ENCODE measurements at regions of chr6 and their contacts with region 1.

Region 1: DNA sequence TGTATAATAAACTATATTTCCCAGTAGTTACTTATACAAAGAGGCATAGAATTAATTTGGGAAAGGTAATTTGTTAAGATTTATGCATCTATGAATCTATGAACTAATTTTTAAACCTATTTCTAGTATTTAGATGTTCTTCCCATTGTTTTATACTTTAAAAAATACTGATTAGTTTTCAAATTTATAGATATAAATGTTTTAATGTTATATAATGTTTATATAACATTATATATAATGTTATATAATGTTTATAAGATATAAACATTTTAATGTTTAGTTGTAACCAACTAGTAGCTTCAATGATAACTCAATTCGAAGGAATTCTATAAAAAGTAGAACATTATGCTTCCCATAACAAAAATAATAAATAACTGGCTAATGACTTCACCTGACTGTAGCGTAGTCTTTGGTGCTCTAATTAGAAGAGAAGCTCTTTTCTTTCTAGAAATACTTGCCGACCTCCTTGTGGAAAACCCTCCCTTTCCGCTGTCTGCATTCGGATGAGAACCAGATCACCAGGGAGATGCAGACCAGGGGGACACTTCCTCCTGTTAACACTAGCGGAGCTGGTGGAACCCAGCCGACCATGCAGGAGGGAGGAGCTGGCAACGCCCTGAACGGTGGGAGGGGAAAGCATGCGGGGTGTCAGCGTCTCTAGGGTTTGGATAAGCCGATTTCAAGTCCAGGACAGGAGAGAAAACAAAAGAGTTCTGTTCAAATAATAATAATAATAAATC is 158.4 kb downstream of the OR2B2 start:
- DNase-seq: peak; percentile 82
- ATAC-seq: peak; percentile 48
- H3K4me3 ChIP-seq: peak overlapping the region; percentile 42 to 73 (median 63)
- H3K4me3 Mint-ChIP-seq: peak overlapping the region; percentile 91
- H3K27ac ChIP-seq: no peak overlapping the region
- H3K27ac Mint-ChIP-seq: peak overlapping the region; percentile 91
- H3K4me1 ChIP-seq: peaks cover 22 to 25% of the 10 kb centered on the region in 2 donors
- H3K4me1 Mint-ChIP-seq: peaks cover 30% of the 10 kb centered on the region
- H3K27me3 ChIP-seq: peaks cover 0 to 26% (median 5%) of the 10 kb centered on the region in 4 experiments
- H3K27me3 Mint-ChIP-seq: peaks cover 6% of the 10 kb centered on the region
- CTCF ChIP-seq: no peak

Region 2: DNA sequence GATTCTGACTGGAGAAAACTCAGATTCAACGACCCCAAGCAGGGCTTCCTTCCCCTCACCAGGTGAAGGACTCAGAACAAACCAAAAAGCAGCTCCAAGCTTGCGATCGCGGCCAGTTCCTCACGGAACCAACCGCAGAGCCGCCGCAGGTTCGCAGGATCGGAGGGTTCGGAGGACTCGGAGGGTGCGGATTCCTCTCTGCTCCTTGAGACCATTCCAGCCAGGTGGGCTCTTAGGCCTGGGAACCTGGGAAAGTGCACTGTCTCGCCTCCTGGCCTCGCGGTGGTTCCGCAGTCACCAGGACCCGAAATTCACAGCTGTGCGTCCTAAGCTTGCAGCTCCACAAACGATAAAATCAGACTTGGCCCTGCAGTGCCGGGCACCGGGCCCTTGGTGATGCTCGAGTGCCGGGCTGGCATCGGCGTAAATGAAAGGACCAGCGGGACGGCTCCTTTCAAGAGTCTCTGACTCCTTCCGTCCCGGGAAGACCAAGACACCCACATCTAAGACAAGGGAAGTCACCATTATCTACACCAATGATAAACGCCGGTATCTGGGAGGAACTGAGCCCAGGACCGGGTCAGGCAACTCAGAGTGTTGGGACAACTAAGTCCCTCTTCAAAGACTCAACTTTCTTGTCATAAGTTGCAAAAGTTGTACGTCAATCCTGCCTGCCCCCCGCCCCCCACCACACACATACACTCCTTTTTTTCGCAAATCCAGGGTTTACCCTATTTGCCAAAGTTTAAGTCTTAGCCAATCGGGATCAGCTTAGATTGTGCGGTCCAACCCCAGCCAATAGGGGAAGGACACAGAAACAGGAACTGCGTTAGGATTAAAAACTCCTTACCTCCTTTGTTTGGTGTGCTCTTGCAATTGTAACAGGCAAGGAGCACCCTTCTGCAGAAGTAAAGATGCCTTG is 576.1 kb before region 1 on chr6:
- CTCF ChIA-PET with region 1: interaction called, 7 read pairs
- POLR2A ChIA-PET with region 1: interaction called, 7 read pairs
- intact Hi-C with region 1: loop called (anchors 2 kb)
- DNase-seq: peak; percentile 90
- ATAC-seq: peak; percentile 86
- H3K4me3 ChIP-seq: peak overlapping the region; percentile 88 to 100 (median 98)
- H3K4me3 Mint-ChIP-seq: peak overlapping the region; percentile 96
- H3K27ac ChIP-seq: peak overlapping the region; percentile 34 to 78
- H3K27ac Mint-ChIP-seq: peak overlapping the region; percentile 91
- H3K4me1 ChIP-seq: peaks cover 0 to 7% of the 10 kb centered on the region in 2 donors
- H3K4me1 Mint-ChIP-seq: peaks cover 15% of the 10 kb centered on the region
- H3K27me3 ChIP-seq: no peaks in the 10 kb centered on the region
- H3K27me3 Mint-ChIP-seq: no peaks in the 10 kb centered on the region
- CTCF ChIP-seq: peak; percentile 71

Region 3: GRCh38 chr6:27441001-27441400 is 312.8 kb before region 1 on chr6:
- CTCF ChIA-PET with region 1: no interaction called
- POLR2A ChIA-PET with region 1: no interaction called
- intact Hi-C with region 1: no loop called
- DNase-seq: no peak
- ATAC-seq: no peak
- H3K4me3 ChIP-seq: no peak overlapping the region
- H3K4me3 Mint-ChIP-seq: no peak overlapping the region
- H3K27ac ChIP-seq: no peak overlapping the region
- H3K27ac Mint-ChIP-seq: no peak overlapping the region
- H3K4me1 ChIP-seq: no peaks in the 10 kb centered on the region
- H3K4me1 Mint-ChIP-seq: no peaks in the 10 kb centered on the region
- H3K27me3 ChIP-seq: no peaks in the 10 kb centered on the region
- H3K27me3 Mint-ChIP-seq: peaks cover under 1% of the 10 kb centered on the region
- CTCF ChIP-seq: no peak

Region 4: DNA sequence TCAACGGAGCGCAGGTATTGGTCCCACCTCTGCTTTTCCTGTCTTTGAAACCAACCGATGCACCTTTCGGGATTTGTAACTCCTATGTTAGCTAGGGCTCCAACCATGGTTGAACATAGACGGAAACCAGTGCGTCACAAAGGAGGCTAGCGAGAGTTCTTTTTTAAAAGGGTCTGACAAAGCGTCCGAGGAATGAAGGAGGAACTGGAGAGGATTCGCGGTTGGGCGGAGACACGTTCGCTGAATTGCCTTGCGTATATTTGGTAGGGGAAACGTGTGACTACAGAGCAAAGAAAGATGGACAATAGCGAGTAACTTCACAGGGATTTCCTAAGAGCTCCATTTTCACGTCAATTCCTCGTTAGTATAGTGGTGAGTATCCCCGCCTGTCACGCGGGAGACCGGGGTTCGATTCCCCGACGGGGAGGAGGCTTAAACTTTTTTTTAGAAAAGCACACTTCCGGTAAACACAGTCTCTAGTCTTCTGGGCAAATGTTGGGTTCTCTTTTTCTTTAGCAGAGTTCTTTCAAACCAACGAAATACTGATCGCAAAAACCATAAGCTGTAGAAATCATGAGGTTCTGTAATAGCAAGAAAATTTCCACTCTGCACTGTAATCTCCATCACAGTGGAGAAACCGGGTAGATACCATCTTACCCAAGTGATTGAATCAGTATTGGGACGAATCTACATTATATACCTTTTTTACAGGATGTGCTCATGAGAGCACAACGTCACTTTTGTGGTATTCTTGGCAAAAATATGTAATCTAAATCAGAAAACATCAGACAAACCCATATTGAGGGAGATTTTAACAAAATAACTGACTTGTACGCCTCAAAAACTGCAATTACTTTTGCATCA is 274.3 kb before region 1 on chr6:
- CTCF ChIA-PET with region 1: interaction called, 12 read pairs
- POLR2A ChIA-PET with region 1: interaction called, 4 read pairs
- intact Hi-C with region 1: loop called (anchors 1 kb)
- DNase-seq: peak; percentile 96
- ATAC-seq: peak; percentile 77
- H3K4me3 ChIP-seq: peak overlapping the region; percentile 88 to 97 (median 95)
- H3K4me3 Mint-ChIP-seq: no peak overlapping the region
- H3K27ac ChIP-seq: peak overlapping the region; percentile 98
- H3K27ac Mint-ChIP-seq: no peak overlapping the region
- H3K4me1 ChIP-seq: peaks cover 15 to 17% of the 10 kb centered on the region in 2 donors
- H3K4me1 Mint-ChIP-seq: peaks cover 6% of the 10 kb centered on the region
- H3K27me3 ChIP-seq: no peaks in the 10 kb centered on the region
- H3K27me3 Mint-ChIP-seq: no peaks in the 10 kb centered on the region
- CTCF ChIP-seq: no peak

Region 5: DNA sequence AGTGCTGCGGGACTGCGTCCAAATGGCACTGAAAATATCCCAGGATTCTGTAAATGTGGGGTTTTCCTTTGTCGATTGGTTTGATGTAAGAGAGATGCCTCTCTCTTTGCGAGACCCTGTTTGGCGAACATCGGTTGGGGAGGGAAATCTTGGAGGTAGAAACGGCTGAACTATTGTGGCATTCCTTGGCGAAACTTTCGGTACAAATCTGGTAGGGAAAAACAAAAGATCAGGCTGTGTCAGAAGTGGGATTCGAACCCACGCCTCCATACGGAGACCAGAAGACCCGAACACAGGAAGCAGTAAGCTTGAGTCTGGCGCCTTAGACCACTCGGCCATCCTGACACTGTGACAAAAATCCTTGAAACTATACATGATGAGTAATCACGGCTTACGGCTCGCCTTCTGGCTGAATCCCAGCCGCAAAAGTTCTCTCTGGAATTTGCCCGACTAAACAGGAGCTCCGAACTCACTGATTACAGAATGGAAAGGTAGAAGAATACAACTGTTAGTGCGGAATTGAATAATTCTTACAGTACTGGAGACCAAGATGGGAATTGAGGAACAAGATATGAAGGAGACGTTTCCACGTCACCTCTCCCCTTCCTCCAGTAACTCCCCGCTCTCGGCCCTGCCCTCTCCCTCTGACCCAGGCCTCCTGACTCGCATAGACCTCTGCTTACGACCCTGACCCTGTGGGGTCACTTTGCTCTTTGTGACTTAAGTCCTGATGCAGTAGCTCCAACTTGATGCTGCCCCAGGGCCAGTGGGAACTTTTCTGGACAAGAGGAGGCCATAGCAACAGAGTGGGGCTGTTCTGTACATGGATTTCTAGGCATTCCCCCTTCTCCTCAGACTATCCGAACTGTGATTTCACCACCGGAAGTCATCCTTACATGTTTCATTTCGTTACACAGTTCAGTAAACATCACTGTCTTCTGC is 148.2 kb before region 1 on chr6:
- CTCF ChIA-PET with region 1: no interaction called
- POLR2A ChIA-PET with region 1: no interaction called
- intact Hi-C with region 1: no loop called
- DNase-seq: peak; percentile 22
- ATAC-seq: no peak
- H3K4me3 ChIP-seq: no peak overlapping the region
- H3K4me3 Mint-ChIP-seq: peak overlapping the region; percentile 13
- H3K27ac ChIP-seq: no peak overlapping the region
- H3K27ac Mint-ChIP-seq: peak overlapping the region; percentile 11
- H3K4me1 ChIP-seq: peaks cover 0 to 12% of the 10 kb centered on the region in 2 donors
- H3K4me1 Mint-ChIP-seq: peaks cover 9% of the 10 kb centered on the region
- H3K27me3 ChIP-seq: peaks cover 0 to 65% (median 36%) of the 10 kb centered on the region in 4 experiments
- H3K27me3 Mint-ChIP-seq: peaks cover 54% of the 10 kb centered on the region
- CTCF ChIP-seq: no peak

Region 6: DNA sequence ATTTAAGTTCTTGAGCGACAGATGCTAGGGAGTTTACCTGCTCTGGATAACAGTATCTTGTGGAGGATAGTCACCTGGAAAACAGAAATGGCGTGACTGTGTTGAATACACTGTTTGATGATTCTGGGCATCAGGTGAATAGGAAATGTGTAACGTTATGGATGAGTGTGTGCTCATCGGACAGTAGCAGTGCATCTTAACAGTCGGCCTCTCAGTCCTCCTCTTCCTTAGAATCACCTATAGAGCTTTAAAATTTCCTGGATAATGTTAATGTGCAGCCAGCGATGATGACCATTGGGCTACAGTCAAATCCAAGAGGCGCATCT is 59.3 kb before region 1 on chr6:
- CTCF ChIA-PET with region 1: interaction called, 10 read pairs
- POLR2A ChIA-PET with region 1: no interaction called
- intact Hi-C with region 1: no loop called
- DNase-seq: no peak
- ATAC-seq: no peak
- H3K4me3 ChIP-seq: peak overlapping the region; percentile 70 to 97 (median 88)
- H3K4me3 Mint-ChIP-seq: peak overlapping the region; percentile 98
- H3K27ac ChIP-seq: no peak overlapping the region
- H3K27ac Mint-ChIP-seq: peak overlapping the region; percentile 88
- H3K4me1 ChIP-seq: peaks cover 6 to 11% of the 10 kb centered on the region in 2 donors
- H3K4me1 Mint-ChIP-seq: peaks cover 23% of the 10 kb centered on the region
- H3K27me3 ChIP-seq: no peaks in the 10 kb centered on the region
- H3K27me3 Mint-ChIP-seq: no peaks in the 10 kb centered on the region
- CTCF ChIP-seq: no peak

Region 7: DNA sequence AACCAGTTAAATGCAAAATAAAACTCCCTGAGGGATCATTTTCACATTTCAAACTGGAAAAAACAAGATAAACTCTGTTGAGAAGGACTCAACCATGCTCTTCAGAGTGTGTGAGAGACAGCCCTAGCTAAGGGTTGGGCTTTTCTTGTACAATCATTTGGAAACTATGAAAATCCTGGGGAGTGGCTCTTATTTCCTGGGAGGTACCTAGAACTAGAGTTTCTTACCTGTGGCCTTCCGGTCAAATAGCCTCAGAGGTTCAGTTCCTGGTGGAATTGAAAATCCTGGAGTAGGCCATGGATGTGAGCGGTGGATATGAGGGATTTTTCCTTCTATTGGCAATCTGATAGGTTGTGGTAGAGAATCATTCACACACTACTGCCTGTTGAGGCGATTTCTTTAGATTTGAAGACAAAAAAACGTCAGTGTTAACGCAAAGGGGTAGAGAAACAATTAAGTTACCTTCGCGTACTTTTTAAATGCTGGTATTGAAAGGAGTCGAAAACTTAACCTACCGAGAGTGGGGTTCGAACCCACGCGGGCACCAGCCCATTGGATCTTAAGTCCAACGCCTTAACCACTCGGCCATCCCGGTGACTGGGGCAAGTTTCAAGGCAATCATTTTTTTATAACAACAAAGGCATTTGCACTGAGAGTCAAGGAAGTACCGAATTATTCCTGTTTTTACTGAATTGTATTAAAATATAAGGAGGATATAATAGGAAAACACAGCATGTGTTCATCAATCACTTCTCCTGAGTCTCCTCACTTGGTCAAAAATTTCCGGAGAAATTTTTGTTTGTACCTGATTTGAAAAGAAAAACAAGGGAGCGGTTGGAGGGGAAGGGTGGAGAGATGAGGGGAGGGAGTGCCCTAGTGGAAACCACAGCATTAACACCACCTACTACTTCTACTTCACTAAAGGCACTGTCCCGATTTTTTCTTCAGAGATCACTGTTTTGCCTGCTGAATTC is 32.9 kb before region 1 on chr6:
- CTCF ChIA-PET with region 1: no interaction called
- POLR2A ChIA-PET with region 1: no interaction called
- intact Hi-C with region 1: no loop called
- DNase-seq: no peak
- ATAC-seq: no peak
- H3K4me3 ChIP-seq: no peak overlapping the region
- H3K4me3 Mint-ChIP-seq: no peak overlapping the region
- H3K27ac ChIP-seq: no peak overlapping the region
- H3K27ac Mint-ChIP-seq: no peak overlapping the region
- H3K4me1 ChIP-seq: no peaks in the 10 kb centered on the region
- H3K4me1 Mint-ChIP-seq: peaks cover 4% of the 10 kb centered on the region
- H3K27me3 ChIP-seq: peaks cover 0 to 24% (median 22%) of the 10 kb centered on the region in 4 experiments
- H3K27me3 Mint-ChIP-seq: peaks cover 40% of the 10 kb centered on the region
- CTCF ChIP-seq: no peak

Region 8: DNA sequence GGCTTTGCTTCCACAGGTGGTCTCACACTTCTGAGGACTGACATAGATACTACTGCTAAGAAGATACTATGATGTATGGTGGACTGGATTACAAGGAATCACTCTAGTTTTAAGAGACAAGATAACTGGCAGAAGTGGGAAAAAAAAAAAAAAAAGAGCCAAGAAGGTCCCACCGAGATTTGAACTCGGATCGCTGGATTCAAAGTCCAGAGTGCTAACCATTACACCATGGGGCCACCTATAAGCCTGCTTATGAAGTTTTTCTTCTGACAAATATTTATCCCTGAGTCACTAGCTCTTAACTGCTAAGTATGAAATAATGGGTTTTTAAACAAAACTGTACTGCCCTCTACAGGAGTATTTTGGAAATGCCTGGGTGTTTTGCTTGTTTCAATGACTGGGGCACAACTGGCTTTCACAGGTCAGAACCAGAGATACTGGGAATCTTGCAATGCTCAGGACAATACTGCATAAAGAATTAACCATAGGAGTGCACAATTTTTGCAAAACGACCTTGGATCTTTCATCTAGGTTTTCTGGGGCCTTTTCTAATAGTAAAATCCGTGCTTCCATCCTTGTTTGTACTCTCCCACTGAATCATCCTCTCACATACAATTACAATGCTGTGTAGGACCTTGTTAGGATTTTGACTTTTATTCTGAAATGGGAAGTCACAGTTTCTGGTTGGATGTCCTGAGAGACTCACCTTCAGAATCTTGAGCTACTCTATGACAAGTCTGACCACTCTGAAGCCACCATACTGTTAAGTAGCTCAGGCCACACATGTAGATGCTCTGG is 42.1 kb after region 1 on chr6:
- CTCF ChIA-PET with region 1: interaction called, 11 read pairs
- POLR2A ChIA-PET with region 1: no interaction called
- intact Hi-C with region 1: loop called (anchors 1 kb)
- DNase-seq: peak; percentile 89
- ATAC-seq: peak; percentile 59
- H3K4me3 ChIP-seq: no peak overlapping the region
- H3K4me3 Mint-ChIP-seq: no peak overlapping the region
- H3K27ac ChIP-seq: no peak overlapping the region
- H3K27ac Mint-ChIP-seq: peak overlapping the region; percentile 17
- H3K4me1 ChIP-seq: peaks cover 19 to 25% of the 10 kb centered on the region in 2 donors
- H3K4me1 Mint-ChIP-seq: peaks cover 22% of the 10 kb centered on the region
- H3K27me3 ChIP-seq: peaks cover 0 to 10% (median 5%) of the 10 kb centered on the region in 4 experiments
- H3K27me3 Mint-ChIP-seq: peaks cover 12% of the 10 kb centered on the region
- CTCF ChIP-seq: peak; percentile 84

Region 9: GRCh38 chr6:27931209-27931608 is 177.4 kb after region 1 on chr6:
- CTCF ChIA-PET with region 1: no interaction called
- POLR2A ChIA-PET with region 1: no interaction called
- intact Hi-C with region 1: no loop called
- DNase-seq: no peak
- ATAC-seq: no peak
- H3K4me3 ChIP-seq: no peak overlapping the region
- H3K4me3 Mint-ChIP-seq: no peak overlapping the region
- H3K27ac ChIP-seq: no peak overlapping the region
- H3K27ac Mint-ChIP-seq: no peak overlapping the region
- H3K4me1 ChIP-seq: no peaks in the 10 kb centered on the region
- H3K4me1 Mint-ChIP-seq: no peaks in the 10 kb centered on the region
- H3K27me3 ChIP-seq: no peaks in the 10 kb centered on the region
- H3K27me3 Mint-ChIP-seq: peaks cover 7% of the 10 kb centered on the region
- CTCF ChIP-seq: no peak

Region 10: DNA sequence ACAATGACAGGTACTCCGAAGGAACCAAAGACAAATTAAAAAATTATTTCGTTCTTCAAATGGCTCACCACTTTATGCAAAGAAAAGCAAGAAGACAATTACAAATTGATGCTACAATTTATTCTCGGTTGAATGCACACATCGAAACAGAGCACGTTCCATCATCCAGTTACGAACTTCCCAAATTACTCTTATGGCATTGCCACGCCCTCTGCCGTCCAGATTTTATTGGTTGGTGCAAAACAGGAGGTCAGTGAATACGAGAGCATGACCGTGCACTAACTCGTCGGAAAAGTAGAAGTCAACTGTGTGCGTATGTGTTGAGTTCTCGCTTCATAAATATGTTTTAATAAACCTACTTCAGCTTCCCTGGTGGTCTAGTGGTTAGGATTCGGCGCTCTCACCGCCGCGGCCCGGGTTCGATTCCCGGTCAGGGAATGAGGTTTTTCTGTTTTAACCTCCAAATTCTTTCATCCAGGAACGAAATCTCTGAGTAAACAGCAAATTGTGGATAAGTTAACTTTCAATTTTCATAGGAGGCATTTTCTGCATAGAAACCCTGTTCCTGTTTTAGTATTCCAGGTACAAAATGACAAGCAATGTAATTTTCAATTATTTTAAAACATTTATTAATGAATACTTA is 1228.1 kb after region 1 on chr6:
- CTCF ChIA-PET with region 1: no interaction called
- POLR2A ChIA-PET with region 1: no interaction called
- intact Hi-C with region 1: loop called (anchors 2 kb)
- DNase-seq: peak; percentile 91
- ATAC-seq: peak; percentile 70
- H3K4me3 ChIP-seq: peak overlapping the region; percentile 67 to 97 (median 75)
- H3K4me3 Mint-ChIP-seq: peak overlapping the region; percentile 93
- H3K27ac ChIP-seq: no peak overlapping the region
- H3K27ac Mint-ChIP-seq: peak overlapping the region; percentile 96
- H3K4me1 ChIP-seq: peaks cover 36 to 37% of the 10 kb centered on the region in 2 donors
- H3K4me1 Mint-ChIP-seq: peaks cover 55% of the 10 kb centered on the region
- H3K27me3 ChIP-seq: peaks cover 0 to 28% (median 14%) of the 10 kb centered on the region in 4 experiments
- H3K27me3 Mint-ChIP-seq: peaks cover 28% of the 10 kb centered on the region
- CTCF ChIP-seq: no peak